ENCODE measurements at regions of chr12 and their contacts with region 1.

Region 1: DNA sequence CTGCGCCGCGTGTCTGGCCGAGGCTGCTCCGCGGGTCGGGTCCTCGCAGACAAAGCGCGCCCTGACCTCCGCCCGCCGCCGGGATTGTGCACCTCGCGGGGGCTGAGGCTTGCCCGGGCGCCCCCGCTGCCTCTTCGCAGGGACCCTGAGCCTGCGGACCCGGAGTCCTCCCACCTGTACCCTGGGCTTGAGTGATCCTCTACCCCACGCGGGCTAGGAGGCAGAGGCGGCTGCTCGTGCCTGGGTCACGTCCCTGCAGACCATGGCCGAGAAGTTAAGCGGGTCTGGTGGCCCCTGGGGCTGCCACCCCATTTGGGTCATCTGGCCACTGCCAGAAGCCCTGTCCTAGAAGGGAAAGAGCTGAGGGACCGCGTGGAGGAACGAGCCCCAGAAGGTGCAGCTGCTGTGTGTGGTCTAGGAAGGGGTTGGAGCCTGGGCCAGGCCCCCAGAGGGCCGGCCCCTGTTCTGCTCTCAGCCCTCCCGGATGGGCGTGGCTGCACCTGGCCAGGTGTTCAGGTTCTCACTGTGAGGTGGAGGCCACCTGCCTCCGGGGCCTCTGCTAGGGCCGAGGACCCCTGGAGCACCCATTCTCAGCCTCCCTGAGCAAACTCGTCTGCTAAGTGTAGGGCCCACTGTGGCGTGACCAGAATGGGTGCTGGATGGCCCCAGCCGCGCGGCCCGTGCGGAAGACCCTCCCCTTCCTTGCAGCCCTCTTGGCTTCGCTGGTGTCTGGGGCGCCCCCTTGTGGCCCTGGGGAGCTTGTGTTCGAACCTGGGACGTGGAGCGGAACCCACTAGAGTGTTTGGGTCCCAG is 49.6 kb downstream of the LRCOL1 start:
- DNase-seq: peak; percentile 81 to 91 (median 86)
- ATAC-seq: peak; percentile 88
- H3K4me3 ChIP-seq: peak overlapping the region; percentile 83
- H3K27ac ChIP-seq: peak overlapping the region; percentile 80
- H3K4me1 ChIP-seq: peaks cover 6 to 60% of the 10 kb centered on the region in 2 experiments; a peak in 2 of 5 replicates
- H3K27me3 ChIP-seq: no peaks in the 10 kb centered on the region
- CTCF ChIP-seq: peak; percentile 71 to 86 (median 76)
- EP300 ChIP-seq: no peak
- POLR2A ChIP-seq: peak; percentile 41; the same call in 1 of the 2 replicates
- RAD21 ChIP-seq: peak; percentile 51 to 60

Region 2: DNA sequence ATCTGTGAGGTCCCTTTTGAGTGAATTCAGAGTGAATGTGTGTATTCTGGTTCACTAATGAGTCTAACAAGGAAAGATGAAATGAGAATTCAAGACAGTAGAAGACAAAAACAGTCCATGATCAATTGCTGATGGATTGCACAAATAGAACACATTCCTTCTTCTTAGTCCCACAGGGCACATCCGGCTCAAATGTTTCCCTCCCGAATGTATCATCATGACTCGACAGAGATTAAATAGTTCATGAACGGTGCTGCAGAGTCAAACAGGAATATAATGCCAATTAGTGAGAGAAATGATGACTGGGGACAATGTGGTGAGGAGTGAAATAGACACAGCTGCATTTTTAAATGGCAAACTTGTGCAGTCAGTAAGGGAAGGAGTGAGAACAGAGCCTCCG is 861.4 kb before region 1 on chr12:
- CTCF ChIA-PET with region 1: no interaction called
- POLR2A ChIA-PET with region 1: no interaction called
- in situ Hi-C with region 1: loop called (anchors 10 kb)
- intact Hi-C with region 1: no loop called
- DNase-seq: no peak
- ATAC-seq: no peak; the same call in 2 of the 3 replicates
- H3K4me3 ChIP-seq: no peak overlapping the region
- H3K27ac ChIP-seq: no peak overlapping the region
- H3K4me1 ChIP-seq: peaks cover 0 to 4% of the 10 kb centered on the region in 2 experiments; a peak in 2 of 5 replicates
- H3K27me3 ChIP-seq: peaks cover 15 to 34% of the 10 kb centered on the region in 2 experiments; a peak in 4 of 5 replicates
- CTCF ChIP-seq: no peak
- EP300 ChIP-seq: no peak
- POLR2A ChIP-seq: no peak
- RAD21 ChIP-seq: no peak

Measured in K562 (cell line).